ENCODE measurements at regions of chr1 and their contacts with region 1.

Region 1: GRCh38 chr1:84181350-84182005 is 37.4 kb downstream of the PRKACB start:
- DNase-seq: no peak
- H3K4me3 ChIP-seq: no peak overlapping the region
- H3K27ac ChIP-seq: no peak overlapping the region
- H3K4me1 ChIP-seq: peaks cover 0 to 9% (median 0%) of the 10 kb centered on the region in 4 donors
- H3K27me3 ChIP-seq: no peaks in the 10 kb centered on the region
- CTCF ChIP-seq: no peak

Region 2: GRCh38 chr1:84206375-84206774 is 24.9 kb after region 1 on chr1:
- intact Hi-C with region 1: loop called (anchors 2 kb)
- DNase-seq: no peak
- H3K4me3 ChIP-seq: no peak overlapping the region
- H3K27ac ChIP-seq: no peak overlapping the region
- H3K4me1 ChIP-seq: no peaks in the 10 kb centered on the region
- H3K27me3 ChIP-seq: no peaks in the 10 kb centered on the region
- CTCF ChIP-seq: no peak

Measured in tibial artery (tissue), 4 donors.